Activated CD4-positive, alpha-beta T cell treated with anti-CD3 and anti-CD28 coated beads for 36 hours (primary cell): ENCODE measurements at regions of chr12 and their contacts with region 1.

Region 1: GRCh38 chr12:3964439-3964838 is 91.2 kb upstream of the PARP11 start:
- DNase-seq: peak; percentile 47
- ATAC-seq: no peak
- H3K4me3 Mint-ChIP-seq: no peak overlapping the region
- H3K27ac Mint-ChIP-seq: no peak overlapping the region
- H3K4me1 Mint-ChIP-seq: peaks cover 18% of the 10 kb centered on the region
- H3K27me3 Mint-ChIP-seq: no peaks in the 10 kb centered on the region

Region 2: GRCh38 chr12:3947781-3948180 is 16.7 kb before region 1 on chr12:
- CTCF ChIA-PET with region 1: interaction called, 10 read pairs
- POLR2A ChIA-PET with region 1: no interaction called
- intact Hi-C with region 1: no loop called
- DNase-seq: no peak
- ATAC-seq: peak; percentile 52
- H3K4me3 Mint-ChIP-seq: peak overlapping the region; percentile 25
- H3K27ac Mint-ChIP-seq: peak overlapping the region; percentile 84
- H3K4me1 Mint-ChIP-seq: peaks cover 60% of the 10 kb centered on the region
- H3K27me3 Mint-ChIP-seq: no peaks in the 10 kb centered on the region

Region 3: GRCh38 chr12:3988519-3989448 is 24.3 kb after region 1 on chr12:
- CTCF ChIA-PET with region 1: interaction called, 11 read pairs
- POLR2A ChIA-PET with region 1: no interaction called
- intact Hi-C with region 1: no loop called
- DNase-seq: peak; percentile 60
- ATAC-seq: peak; percentile 71
- H3K4me3 Mint-ChIP-seq: peak overlapping the region; percentile 11
- H3K27ac Mint-ChIP-seq: peak overlapping the region; percentile 76
- H3K4me1 Mint-ChIP-seq: peaks cover 35% of the 10 kb centered on the region
- H3K27me3 Mint-ChIP-seq: no peaks in the 10 kb centered on the region

Region 4: DNA sequence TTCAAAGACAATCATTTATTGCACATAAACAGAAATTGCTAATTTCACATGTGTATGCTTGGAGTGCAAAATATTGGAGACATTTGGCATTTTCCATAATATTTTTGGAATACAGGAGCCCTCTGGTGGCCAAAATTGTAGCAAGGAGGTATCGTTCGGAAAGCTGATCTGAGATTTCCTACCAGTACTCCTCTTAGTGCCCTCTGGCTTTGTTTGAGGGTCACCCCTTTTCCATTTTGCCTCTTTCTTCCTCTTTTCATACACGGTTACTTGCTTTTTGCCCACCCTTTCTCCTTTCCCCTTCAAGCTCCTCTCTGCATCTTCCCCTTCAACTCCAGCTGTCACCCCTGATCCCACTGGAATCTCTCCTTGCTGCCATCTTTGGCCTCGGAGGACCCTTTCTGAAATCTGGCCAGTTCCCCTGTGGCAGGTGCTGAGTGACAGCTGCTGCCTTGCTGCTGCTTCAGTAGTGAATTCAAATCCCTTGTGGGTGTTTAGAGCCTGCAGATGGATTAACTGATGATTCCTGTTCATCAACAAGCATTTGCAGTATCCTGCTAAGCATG is 73.4 kb after region 1 on chr12:
- CTCF ChIA-PET with region 1: interaction called, 6 read pairs
- POLR2A ChIA-PET with region 1: no interaction called
- intact Hi-C with region 1: loop called in 1 of 2 experiments (anchors 1 kb)
- DNase-seq: peak; percentile 35
- ATAC-seq: no peak
- H3K4me3 Mint-ChIP-seq: no peak overlapping the region
- H3K27ac Mint-ChIP-seq: no peak overlapping the region
- H3K4me1 Mint-ChIP-seq: peaks cover 5% of the 10 kb centered on the region
- H3K27me3 Mint-ChIP-seq: no peaks in the 10 kb centered on the region

Region 5: GRCh38 chr12:4320853-4321701 is 356.6 kb after region 1 on chr12 and contains the start of gene TIGAR:
- CTCF ChIA-PET with region 1: no interaction called
- POLR2A ChIA-PET with region 1: no interaction called
- intact Hi-C with region 1: no loop called
- DNase-seq: peak; percentile 96
- ATAC-seq: peak; percentile 99
- H3K4me3 Mint-ChIP-seq: peak within 1 kb of the TSS; percentile 89
- H3K27ac Mint-ChIP-seq: peak within 1 kb of the TSS; percentile 85
- H3K4me1 Mint-ChIP-seq: peaks cover 33% of the 10 kb centered on the region
- H3K27me3 Mint-ChIP-seq: no peaks in the 10 kb centered on the region
- total RNA-seq, gene TIGAR: 7.1 to 8.4 TPM

Region 6: GRCh38 chr12:5601783-5602182 is 1637.3 kb after region 1 on chr12:
- CTCF ChIA-PET with region 1: no interaction called
- POLR2A ChIA-PET with region 1: no interaction called
- intact Hi-C with region 1: no loop called
- DNase-seq: no peak
- ATAC-seq: no peak
- H3K4me3 Mint-ChIP-seq: no peak overlapping the region
- H3K27ac Mint-ChIP-seq: no peak overlapping the region
- H3K4me1 Mint-ChIP-seq: no peaks in the 10 kb centered on the region
- H3K27me3 Mint-ChIP-seq: peaks cover 4% of the 10 kb centered on the region